CD8-positive, alpha-beta T cell (primary cell): ENCODE measurements at regions of chr5 and their contacts with region 1.

Region 1: DNA sequence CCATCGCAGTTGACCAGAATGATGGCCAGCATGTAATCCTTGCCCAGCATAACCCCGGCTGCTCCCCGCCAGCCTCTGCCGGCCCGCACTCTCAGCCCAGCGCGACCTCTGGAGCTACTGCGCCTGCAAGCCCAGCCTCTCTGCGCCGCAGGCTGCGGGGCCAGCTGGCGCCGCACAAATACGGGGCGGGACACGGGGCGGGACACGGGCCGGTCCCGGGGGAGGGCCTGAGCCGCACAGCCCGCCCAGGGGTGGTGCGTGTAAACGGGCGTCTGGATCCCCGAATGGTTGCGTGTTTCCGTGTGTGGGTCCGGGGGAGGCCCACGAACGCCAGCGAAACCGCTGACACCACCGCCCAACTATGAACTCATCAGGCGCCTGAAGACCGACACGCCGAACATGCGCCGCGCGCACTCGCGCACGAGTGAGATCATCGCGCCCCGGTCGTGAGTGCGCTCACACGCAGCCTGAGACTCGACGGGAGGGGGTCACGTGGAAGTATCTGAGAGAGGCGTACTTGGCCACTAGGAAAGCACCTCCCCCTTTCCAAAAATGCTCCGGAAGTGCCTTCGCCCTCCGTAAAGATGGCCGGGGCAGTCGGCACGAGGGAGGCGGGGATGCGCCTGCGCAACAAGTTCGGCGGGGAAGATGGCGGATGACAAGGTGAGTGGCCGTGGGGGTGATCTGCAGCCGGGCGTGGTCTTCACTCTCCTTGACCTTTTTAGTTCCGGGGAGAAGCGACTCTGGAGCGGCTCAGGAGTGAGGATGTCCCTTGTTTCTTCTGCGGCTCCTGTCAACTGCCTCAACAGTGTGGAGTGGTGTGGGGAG is at the starts of genes APBB3 and SLC35A4:
- DNase-seq: peak; percentile 92 to 100 (median 95)
- ATAC-seq: peak; percentile 88
- H3K4me3 ChIP-seq: peak within 1 kb of the TSS; percentile 52 to 79
- H3K4me3 Mint-ChIP-seq: peak within 1 kb of the TSS; percentile 88
- H3K27ac ChIP-seq: peak within 1 kb of the TSS; percentile 73 to 92
- H3K27ac Mint-ChIP-seq: peak within 1 kb of the TSS; percentile 94
- H3K4me1 ChIP-seq: peaks cover 30% of the 10 kb centered on the region
- H3K4me1 Mint-ChIP-seq: peaks cover 62% of the 10 kb centered on the region
- H3K27me3 ChIP-seq: no peaks in the 10 kb centered on the region
- H3K27me3 Mint-ChIP-seq: no peaks in the 10 kb centered on the region
- CTCF ChIP-seq: no peak
- total RNA-seq, gene APBB3: 51.0 to 51.7 TPM
- total RNA-seq, gene SLC35A4: 14.8 to 19.4 TPM

Region 2: DNA sequence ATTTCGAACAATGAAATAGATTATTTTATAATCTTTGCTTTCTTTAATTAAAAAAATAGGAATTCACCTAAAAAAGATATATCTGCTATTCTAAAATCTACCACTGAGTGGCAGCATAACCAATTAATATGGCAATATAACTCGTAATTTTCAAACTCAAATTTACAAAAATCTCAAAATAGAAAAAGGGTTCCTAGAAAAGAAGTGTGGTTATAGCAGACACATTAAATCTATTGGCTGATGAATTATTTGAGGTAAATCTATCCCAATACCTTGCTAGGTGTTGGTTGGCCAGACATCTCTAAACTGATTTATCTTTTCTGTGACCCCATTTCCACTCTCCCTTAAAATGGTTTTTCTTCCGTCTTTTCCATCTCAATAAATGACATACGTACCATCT is 491.1 kb before region 1 on chr5:
- CTCF ChIA-PET with region 1: no interaction called
- POLR2A ChIA-PET with region 1: no interaction called
- intact Hi-C with region 1: no loop called
- DNase-seq: peak in 2 of 9 experiments; percentile 56 to 62
- ATAC-seq: no peak
- H3K4me3 ChIP-seq: no peak overlapping the region
- H3K4me3 Mint-ChIP-seq: no peak overlapping the region
- H3K27ac ChIP-seq: no peak overlapping the region
- H3K27ac Mint-ChIP-seq: no peak overlapping the region
- H3K4me1 ChIP-seq: no peaks in the 10 kb centered on the region
- H3K4me1 Mint-ChIP-seq: no peaks in the 10 kb centered on the region
- H3K27me3 ChIP-seq: peaks cover 0 to 12% of the 10 kb centered on the region in 2 experiments
- H3K27me3 Mint-ChIP-seq: peaks cover 28% of the 10 kb centered on the region
- CTCF ChIP-seq: peak; percentile 94

Region 3: GRCh38 chr5:140302786-140303639 is 261.4 kb before region 1 on chr5 and contains the start of gene PFDN1:
- CTCF ChIA-PET with region 1: no interaction called
- POLR2A ChIA-PET with region 1: no interaction called
- intact Hi-C with region 1: loop called (anchors 5 to 10 kb)
- DNase-seq: peak; percentile 77 to 97 (median 90)
- ATAC-seq: peak; percentile 100
- H3K4me3 ChIP-seq: peak within 1 kb of the TSS; percentile 73 to 87
- H3K4me3 Mint-ChIP-seq: peak within 1 kb of the TSS; percentile 99
- H3K27ac ChIP-seq: peak within 1 kb of the TSS; percentile 61 to 82
- H3K27ac Mint-ChIP-seq: peak within 1 kb of the TSS; percentile 98
- H3K4me1 ChIP-seq: peaks cover 14% of the 10 kb centered on the region
- H3K4me1 Mint-ChIP-seq: peaks cover 29% of the 10 kb centered on the region
- H3K27me3 ChIP-seq: no peaks in the 10 kb centered on the region
- H3K27me3 Mint-ChIP-seq: peaks cover 4% of the 10 kb centered on the region
- CTCF ChIP-seq: no peak
- total RNA-seq, gene PFDN1: 28.4 to 30.5 TPM

Region 4: GRCh38 chr5:140547508-140548299 is 16.7 kb before region 1 on chr5 and contains the start of gene EIF4EBP3:
- CTCF ChIA-PET with region 1: interaction called, 7 read pairs
- POLR2A ChIA-PET with region 1: interaction called, 42 read pairs
- intact Hi-C with region 1: loop called (anchors 1 kb)
- DNase-seq: peak; percentile 74 to 94 (median 88)
- ATAC-seq: peak; percentile 97
- H3K4me3 ChIP-seq: peak within 1 kb of the TSS; percentile 69 to 96
- H3K4me3 Mint-ChIP-seq: peak within 1 kb of the TSS; percentile 90
- H3K27ac ChIP-seq: peak within 1 kb of the TSS; percentile 88 to 96
- H3K27ac Mint-ChIP-seq: peak within 1 kb of the TSS; percentile 98
- H3K4me1 ChIP-seq: peaks cover 21% of the 10 kb centered on the region
- H3K4me1 Mint-ChIP-seq: peaks cover 31% of the 10 kb centered on the region
- H3K27me3 ChIP-seq: no peaks in the 10 kb centered on the region
- H3K27me3 Mint-ChIP-seq: no peaks in the 10 kb centered on the region
- CTCF ChIP-seq: peak; percentile 72
- total RNA-seq, gene EIF4EBP3: 10.6 to 13.7 TPM

Region 5: GRCh38 chr5:140664359-140665119 is 100.1 kb after region 1 on chr5 and contains the start of gene WDR55:
- CTCF ChIA-PET with region 1: no interaction called
- POLR2A ChIA-PET with region 1: interaction called, 3 read pairs
- intact Hi-C with region 1: loop called (anchors 1 kb)
- DNase-seq: peak; percentile 90 to 98 (median 97)
- ATAC-seq: peak; percentile 92
- H3K4me3 ChIP-seq: peak within 1 kb of the TSS; percentile 80 to 95
- H3K4me3 Mint-ChIP-seq: peak within 1 kb of the TSS; percentile 89
- H3K27ac ChIP-seq: peak within 1 kb of the TSS; percentile 90 to 91
- H3K27ac Mint-ChIP-seq: peak within 1 kb of the TSS; percentile 96
- H3K4me1 ChIP-seq: peaks cover 15% of the 10 kb centered on the region
- H3K4me1 Mint-ChIP-seq: peaks cover 38% of the 10 kb centered on the region
- H3K27me3 ChIP-seq: no peaks in the 10 kb centered on the region
- H3K27me3 Mint-ChIP-seq: no peaks in the 10 kb centered on the region
- CTCF ChIP-seq: no peak
- total RNA-seq, gene WDR55: 45.4 to 49.2 TPM

Region 6: DNA sequence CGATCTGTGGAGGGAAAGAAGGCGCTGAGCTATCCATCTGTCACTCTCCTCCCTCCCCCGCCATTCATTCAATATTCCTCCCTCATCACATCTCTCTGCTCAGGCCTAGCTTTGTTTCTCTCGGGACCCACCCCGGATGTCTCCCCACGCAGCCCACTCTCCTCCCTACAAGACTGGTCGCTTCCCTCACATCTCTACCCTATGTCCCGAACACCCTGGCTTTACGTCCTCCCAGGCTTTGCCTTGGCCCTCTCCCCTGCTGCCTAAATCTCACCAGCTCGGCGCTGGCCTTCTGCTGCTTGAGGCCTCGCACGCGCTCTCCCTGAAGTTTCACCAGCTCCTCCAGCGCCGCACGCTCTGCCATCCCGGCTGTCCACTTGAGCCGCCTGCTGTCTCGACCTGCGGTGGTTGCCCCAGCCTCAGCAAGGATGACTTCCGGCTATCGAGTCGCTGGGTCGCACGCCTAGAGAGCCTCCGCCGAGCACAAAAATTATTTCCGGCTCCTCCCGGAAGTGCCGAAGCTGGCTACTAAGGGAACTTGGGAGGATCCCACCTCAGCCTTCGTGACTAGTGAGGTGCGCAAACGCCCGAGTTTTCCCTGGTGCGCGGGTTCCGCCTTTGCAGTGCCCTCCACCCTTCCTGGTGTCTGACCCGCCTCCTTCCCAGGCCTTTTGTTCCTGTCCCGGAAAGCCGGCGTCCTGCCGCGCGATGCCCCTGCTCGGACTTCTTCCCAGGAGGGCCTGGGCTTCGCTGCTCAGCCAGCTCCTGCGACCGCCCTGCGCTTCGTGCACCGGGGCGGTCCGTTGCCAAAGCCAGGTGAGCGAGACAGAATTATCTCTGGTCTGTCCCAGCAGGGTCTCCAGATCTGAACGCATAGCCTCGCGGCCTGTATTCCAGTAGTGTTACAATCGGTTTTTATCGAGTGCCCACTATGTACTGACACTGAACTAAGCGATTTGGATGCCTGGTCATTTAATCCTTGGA is 126.8 kb after region 1 on chr5 and contains the starts of genes HARS1 and HARS2:
- CTCF ChIA-PET with region 1: interaction called, 4 read pairs
- POLR2A ChIA-PET with region 1: no interaction called
- intact Hi-C with region 1: loop called (anchors 1 to 5 kb)
- DNase-seq: peak; percentile 58 to 92 (median 83)
- ATAC-seq: peak; percentile 88
- H3K4me3 ChIP-seq: peak within 1 kb of the TSS; percentile 84 to 94
- H3K4me3 Mint-ChIP-seq: peak within 1 kb of the TSS; percentile 99
- H3K27ac ChIP-seq: peak within 1 kb of the TSS; percentile 77 to 87
- H3K27ac Mint-ChIP-seq: peak within 1 kb of the TSS; percentile 98
- H3K4me1 ChIP-seq: peaks cover 23% of the 10 kb centered on the region
- H3K4me1 Mint-ChIP-seq: peaks cover 48% of the 10 kb centered on the region
- H3K27me3 ChIP-seq: no peaks in the 10 kb centered on the region
- H3K27me3 Mint-ChIP-seq: no peaks in the 10 kb centered on the region
- CTCF ChIP-seq: no peak
- total RNA-seq, gene HARS1: 67.3 to 70.2 TPM
- total RNA-seq, gene HARS2: 41.3 to 43.2 TPM